Activated CD4-positive, alpha-beta T cell treated with anti-CD3 and anti-CD28 coated beads for 36 hours (primary cell): ENCODE measurements at regions of chr2 and their contacts with region 1.

Region 1: DNA sequence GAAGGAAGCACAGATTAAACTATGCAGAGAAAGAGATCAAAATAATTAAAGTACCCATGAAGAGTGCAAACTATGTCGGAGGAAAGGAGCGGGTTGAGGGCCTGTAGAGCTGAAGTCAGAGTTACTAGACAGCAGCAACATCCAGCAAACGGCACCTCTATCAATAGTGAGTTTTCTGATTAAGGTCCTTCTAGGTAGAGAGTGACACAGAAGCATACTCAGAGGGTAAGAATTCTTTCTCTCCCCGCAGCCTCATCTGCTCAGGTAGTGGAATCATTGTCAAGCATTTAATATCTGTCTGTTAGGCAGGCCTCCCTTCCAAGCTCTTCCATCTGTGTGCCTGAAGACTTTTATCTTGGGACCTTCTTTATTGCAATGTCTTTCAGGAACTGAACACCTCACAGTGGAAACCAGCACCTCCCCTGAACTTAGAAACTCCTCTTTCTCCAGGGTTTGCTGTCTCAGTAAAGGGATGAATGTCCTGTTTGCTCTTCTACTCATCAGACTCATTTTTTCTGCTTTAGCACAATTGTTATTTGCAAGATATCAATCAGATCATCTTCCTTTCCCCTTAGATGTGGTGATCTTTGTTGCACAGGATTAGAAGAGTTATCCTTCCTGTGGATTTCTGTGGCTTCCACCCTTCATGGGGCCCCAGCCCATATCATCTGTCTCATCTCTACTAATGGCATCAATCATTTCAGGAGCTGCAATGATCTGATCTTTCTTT is 28.8 kb downstream of the SP140 start:
- DNase-seq: peak; percentile 73
- ATAC-seq: peak; percentile 79
- H3K4me3 Mint-ChIP-seq: no peak overlapping the region
- H3K27ac Mint-ChIP-seq: no peak overlapping the region
- H3K4me1 Mint-ChIP-seq: peaks cover 18% of the 10 kb centered on the region
- H3K27me3 Mint-ChIP-seq: no peaks in the 10 kb centered on the region

Region 2: GRCh38 chr2:230225486-230225885 is 28.8 kb before region 1 on chr2 and contains the start of gene SP140:
- CTCF ChIA-PET with region 1: interaction called, 6 read pairs
- POLR2A ChIA-PET with region 1: interaction called, 5 read pairs
- intact Hi-C with region 1: loop called in 1 of 2 experiments (anchors 2 kb)
- DNase-seq: peak; percentile 85
- ATAC-seq: peak; percentile 87
- H3K4me3 Mint-ChIP-seq: peak within 1 kb of the TSS; percentile 81
- H3K27ac Mint-ChIP-seq: peak within 1 kb of the TSS; percentile 96
- H3K4me1 Mint-ChIP-seq: peaks cover 51% of the 10 kb centered on the region
- H3K27me3 Mint-ChIP-seq: no peaks in the 10 kb centered on the region
- total RNA-seq, gene SP140: 71.3 to 84.2 TPM

Region 3: DNA sequence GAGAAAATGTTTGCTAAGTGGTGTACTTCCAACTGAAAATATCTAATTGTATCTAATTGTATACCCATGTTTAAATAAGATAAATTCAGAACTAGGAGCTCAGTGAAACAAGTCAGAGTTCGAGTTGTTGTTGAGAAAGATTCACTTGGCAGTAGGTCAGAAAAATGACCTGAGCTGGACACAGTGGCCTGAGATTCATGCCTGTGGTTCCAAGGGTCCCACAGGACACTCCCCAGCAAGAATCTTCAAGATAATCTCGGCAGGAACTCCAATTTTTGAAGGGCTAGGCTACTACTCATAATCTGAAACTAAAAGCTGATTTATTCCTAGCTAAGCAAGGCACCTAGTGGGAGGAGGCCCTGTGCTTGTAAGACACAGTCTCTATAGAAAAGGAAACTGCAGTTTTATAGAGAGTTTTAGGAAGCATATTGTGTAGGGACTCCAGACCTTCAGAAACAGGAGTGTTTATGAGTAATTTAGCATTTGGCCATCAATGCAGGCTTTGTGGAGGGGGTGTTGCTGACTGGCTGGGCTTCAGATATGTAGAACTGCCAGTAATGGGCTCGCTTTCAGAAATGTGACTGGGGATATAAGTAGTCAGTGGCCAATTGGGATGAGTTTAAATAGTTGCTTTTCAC is 14.4 kb after region 1 on chr2:
- CTCF ChIA-PET with region 1: interaction called, 3 read pairs
- POLR2A ChIA-PET with region 1: interaction called, 3 read pairs
- intact Hi-C with region 1: loop called (anchors 1 kb)
- DNase-seq: peak; percentile 41
- ATAC-seq: peak; percentile 75
- H3K4me3 Mint-ChIP-seq: peak overlapping the region; percentile 11
- H3K27ac Mint-ChIP-seq: peak overlapping the region; percentile 74
- H3K4me1 Mint-ChIP-seq: peaks cover 43% of the 10 kb centered on the region
- H3K27me3 Mint-ChIP-seq: no peaks in the 10 kb centered on the region

Region 4: DNA sequence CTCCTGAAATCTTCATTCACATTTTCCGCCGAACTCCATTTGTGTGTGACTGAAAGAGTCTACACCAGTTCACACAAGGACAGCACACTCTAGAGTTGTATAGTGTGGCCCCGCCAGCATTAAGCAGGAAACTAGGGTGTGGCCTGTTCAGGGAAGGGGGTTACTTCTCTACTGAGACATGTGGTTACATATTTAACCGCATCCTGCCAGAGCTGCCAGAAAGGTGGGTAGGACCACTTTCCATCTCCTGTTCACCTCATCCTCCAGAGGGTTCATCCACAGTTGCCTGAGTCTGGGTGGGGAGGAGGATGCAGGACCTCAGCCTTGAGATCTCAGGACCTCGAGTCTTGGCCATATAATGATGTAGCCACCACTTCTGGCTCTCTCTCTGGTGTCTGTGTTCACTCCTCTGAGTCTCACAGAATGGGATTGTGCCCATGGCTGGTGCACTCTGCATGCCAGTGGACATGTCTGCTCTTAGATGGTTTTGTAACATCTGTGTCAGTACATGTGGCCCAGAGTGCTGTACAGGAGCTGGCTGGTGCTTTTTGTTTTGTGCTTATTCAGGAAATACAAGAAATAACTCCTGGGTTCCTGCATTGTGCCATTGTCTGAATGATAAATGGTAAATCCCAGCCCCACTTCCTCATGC is 65.0 kb after region 1 on chr2:
- CTCF ChIA-PET with region 1: no interaction called
- POLR2A ChIA-PET with region 1: no interaction called
- intact Hi-C with region 1: loop called (anchors 2 to 5 kb)
- DNase-seq: peak; percentile 80
- ATAC-seq: peak; percentile 96
- H3K4me3 Mint-ChIP-seq: peak overlapping the region; percentile 23
- H3K27ac Mint-ChIP-seq: peak overlapping the region; percentile 99
- H3K4me1 Mint-ChIP-seq: peaks cover 58% of the 10 kb centered on the region
- H3K27me3 Mint-ChIP-seq: no peaks in the 10 kb centered on the region